ENCODE measurements at regions of chr6 and their contacts with region 1.

Region 1: DNA sequence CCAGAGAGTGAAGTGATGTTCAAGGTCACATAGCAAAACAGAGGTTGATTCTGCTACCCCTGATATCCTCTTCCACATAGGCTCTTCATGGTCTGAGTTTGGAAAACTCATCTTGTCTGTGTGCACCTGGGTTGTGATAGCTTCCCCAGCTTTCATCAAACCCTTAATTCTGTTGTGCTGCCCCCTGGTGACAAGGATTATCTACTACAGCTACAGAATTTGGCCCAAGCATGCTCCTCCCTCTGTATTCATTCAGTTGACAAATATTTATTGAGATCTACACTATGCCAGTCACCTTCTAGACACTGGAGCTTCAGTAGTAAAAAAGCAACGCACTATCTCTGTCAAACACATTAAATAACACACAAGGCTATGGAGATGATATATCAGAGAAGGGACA is 50.4 kb downstream of the SMPDL3A start:
- DNase-seq: peak; percentile 66
- H3K4me3 ChIP-seq: no peak overlapping the region
- H3K27ac ChIP-seq: no peak overlapping the region
- H3K4me1 ChIP-seq: no peaks in the 10 kb centered on the region
- H3K27me3 ChIP-seq: no peaks in the 10 kb centered on the region
- CTCF ChIP-seq: peak; percentile 20 to 69 (median 54)
- EP300 ChIP-seq: no peak
- POLR2A ChIP-seq: no peak

Region 2: DNA sequence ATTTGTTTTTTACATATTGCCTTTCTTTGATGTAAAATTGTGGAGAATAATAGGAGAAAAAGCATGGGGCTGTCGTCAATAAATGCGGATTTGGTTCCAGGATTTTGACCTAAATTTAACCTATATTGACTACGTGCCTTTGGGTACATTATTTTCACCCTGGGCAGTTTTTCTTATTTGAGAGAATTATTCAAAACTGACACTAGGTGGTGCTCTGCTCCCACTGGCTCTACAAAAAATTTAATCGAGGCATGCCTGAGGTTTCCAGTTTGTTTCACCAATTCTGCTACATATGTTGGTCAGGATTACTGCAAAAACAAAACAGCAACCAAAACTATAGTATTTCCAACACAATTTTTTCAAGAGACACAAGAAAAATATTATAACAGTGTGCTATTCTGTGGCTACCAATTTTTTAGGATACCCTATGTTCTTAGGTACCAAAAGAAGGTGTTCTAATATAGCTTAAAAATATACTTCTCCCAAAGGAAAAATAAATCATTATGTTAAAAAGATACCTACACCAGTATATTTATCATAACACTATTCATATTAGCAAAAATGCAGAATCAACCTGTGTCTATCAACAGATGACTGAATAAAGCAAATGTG is 108.6 kb before region 1 on chr6:
- intact Hi-C with region 1: loop called (anchors 2 kb)
- DNase-seq: no peak
- H3K4me3 ChIP-seq: no peak overlapping the region
- H3K27ac ChIP-seq: no peak overlapping the region
- H3K4me1 ChIP-seq: no peaks in the 10 kb centered on the region
- H3K27me3 ChIP-seq: no peaks in the 10 kb centered on the region
- CTCF ChIP-seq: peak; percentile 30 to 78 (median 61)
- EP300 ChIP-seq: no peak
- POLR2A ChIP-seq: no peak

Region 3: GRCh38 chr6:123022975-123023374 is 183.5 kb after region 1 on chr6:
- intact Hi-C with region 1: no loop called
- DNase-seq: no peak
- H3K4me3 ChIP-seq: no peak overlapping the region
- H3K27ac ChIP-seq: no peak overlapping the region
- H3K4me1 ChIP-seq: peaks cover 0 to 10% (median 6%) of the 10 kb centered on the region in 4 donors
- H3K27me3 ChIP-seq: no peaks in the 10 kb centered on the region
- CTCF ChIP-seq: no peak
- EP300 ChIP-seq: no peak
- POLR2A ChIP-seq: no peak

Region 4: GRCh38 chr6:123105561-123105960 is 266.1 kb after region 1 on chr6:
- intact Hi-C with region 1: no loop called
- DNase-seq: no peak
- H3K4me3 ChIP-seq: no peak overlapping the region
- H3K27ac ChIP-seq: no peak overlapping the region
- H3K4me1 ChIP-seq: no peaks in the 10 kb centered on the region
- H3K27me3 ChIP-seq: no peaks in the 10 kb centered on the region
- CTCF ChIP-seq: no peak
- EP300 ChIP-seq: no peak
- POLR2A ChIP-seq: no peak

Region 5: GRCh38 chr6:123448306-123448884 is 608.9 kb after region 1 on chr6:
- intact Hi-C with region 1: no loop called
- DNase-seq: no peak
- H3K4me3 ChIP-seq: no peak overlapping the region
- H3K27ac ChIP-seq: no peak overlapping the region
- H3K4me1 ChIP-seq: no peaks in the 10 kb centered on the region
- H3K27me3 ChIP-seq: no peaks in the 10 kb centered on the region
- CTCF ChIP-seq: no peak
- EP300 ChIP-seq: no peak
- POLR2A ChIP-seq: no peak

Measured in sigmoid colon (tissue), 7 donors.